Right ventricle myocardium inferior (tissue), 1 donor: ENCODE measurements at regions of chr11 and their contacts with region 1.

Region 1: DNA sequence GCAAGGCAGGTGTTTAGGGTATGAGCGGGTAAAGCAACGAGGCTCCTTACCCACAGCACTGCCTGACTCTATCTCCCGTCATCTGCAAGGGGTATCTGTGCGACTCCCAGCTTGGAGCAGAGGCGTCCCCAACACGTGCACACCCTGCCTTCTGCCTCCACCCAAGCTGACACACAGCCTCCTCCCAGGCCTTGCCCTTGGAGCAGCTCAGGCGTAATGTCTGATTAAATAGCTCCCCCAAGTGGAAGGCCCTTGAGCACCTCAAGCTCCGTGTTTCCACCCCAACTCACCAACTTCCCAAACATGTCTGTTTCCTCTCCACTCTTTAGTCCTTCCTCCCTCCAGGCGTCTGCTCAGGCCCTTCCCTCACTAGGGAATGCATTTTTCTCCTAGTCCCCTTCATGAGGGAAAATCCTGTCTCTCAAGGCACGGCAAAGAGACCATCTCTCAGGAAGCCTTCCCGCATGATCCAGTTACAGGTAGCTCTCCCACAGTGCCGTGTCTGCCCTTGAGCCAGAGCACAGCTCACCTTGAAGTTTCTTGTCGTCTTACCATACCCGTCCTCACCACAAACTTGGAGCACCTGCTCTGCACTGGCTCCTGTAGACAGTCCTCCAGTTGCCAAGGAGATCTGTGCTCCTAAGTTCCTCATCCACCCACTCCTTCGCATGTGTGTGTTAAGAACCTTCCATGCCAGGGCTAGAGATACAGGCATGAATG is 15.8 kb downstream of the CYB5R2 start:
- DNase-seq: peak; percentile 77
- ATAC-seq: peak; percentile 92

Region 2: DNA sequence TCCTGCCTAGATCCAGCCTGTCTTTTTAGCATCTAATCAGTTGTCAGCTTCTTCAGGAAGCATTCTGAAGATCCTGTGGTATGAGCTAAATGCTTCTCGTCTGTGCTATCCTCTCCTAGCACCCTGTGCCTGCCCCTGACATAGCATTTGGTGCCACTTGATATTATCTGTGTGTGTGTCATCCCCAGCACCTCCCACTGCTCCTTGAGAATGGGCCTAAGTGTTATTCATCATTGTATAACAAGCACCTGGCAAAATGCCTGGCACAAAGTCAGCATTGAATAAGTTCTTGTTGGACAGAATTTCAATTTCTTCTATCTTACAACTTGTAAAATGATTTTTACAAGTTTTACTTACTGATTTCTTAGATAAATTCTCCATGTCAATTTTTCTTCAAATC is 200.3 kb before region 1 on chr11:
- intact Hi-C with region 1: loop called (anchors 10 kb)
- DNase-seq: no peak
- ATAC-seq: no peak

Region 3: GRCh38 chr11:7513234-7514098 is 144.0 kb before region 1 on chr11 and contains the start of gene PPFIBP2:
- intact Hi-C with region 1: loop called (anchors 2 kb)
- DNase-seq: peak; percentile 93
- ATAC-seq: peak; percentile 93
- total RNA-seq, gene PPFIBP2: 21.4 TPM

Region 4: DNA sequence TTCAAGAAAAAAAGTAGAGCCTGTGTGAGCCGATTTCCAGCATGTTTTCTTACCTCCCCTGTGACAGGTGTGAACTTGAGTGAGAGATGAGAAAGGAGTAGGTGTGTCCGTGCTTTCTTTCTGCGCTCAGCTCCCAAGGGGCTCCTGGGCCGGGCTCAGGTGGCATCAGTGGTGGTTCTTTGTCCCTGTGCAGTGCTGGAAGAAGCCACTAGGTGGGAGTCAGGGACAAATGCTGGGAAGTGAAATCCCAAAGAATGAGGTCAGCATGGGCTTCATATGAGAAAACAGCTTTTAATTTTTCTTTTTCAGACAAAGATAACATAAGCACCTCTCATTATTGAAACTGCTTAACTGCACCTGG is 85.8 kb before region 1 on chr11:
- intact Hi-C with region 1: loop called (anchors 1 kb)
- DNase-seq: no peak
- ATAC-seq: peak; percentile 69

Region 5: GRCh38 chr11:7965386-7965785 is 307.9 kb after region 1 on chr11 and contains the start of gene NLRP10:
- intact Hi-C with region 1: no loop called
- DNase-seq: no peak
- ATAC-seq: no peak
- total RNA-seq, gene NLRP10: not detected